HEK293 (cell line): ENCODE measurements at regions of chr7 and their contacts with region 1.

Region 1: GRCh38 chr7:138738551-138739335 is 37.6 kb upstream of the SVOPL start:
- H3K4me3 ChIP-seq: no peak overlapping the region
- H3K27ac ChIP-seq: no peak overlapping the region
- H3K4me1 ChIP-seq: no peaks in the 10 kb centered on the region
- CTCF ChIP-seq: peak; percentile 83

Region 2: GRCh38 chr7:138008547-138009349 is 730.0 kb before region 1 on chr7:
- CTCF ChIA-PET with region 1: interaction called, 10 read pairs
- POLR2A ChIA-PET with region 1: no interaction called
- H3K4me3 ChIP-seq: no peak overlapping the region
- H3K27ac ChIP-seq: no peak overlapping the region
- H3K4me1 ChIP-seq: no peaks in the 10 kb centered on the region
- CTCF ChIP-seq: peak; percentile 69

Region 3: GRCh38 chr7:138161600-138162081 is 577.1 kb before region 1 on chr7:
- CTCF ChIA-PET with region 1: interaction called, 39 read pairs
- POLR2A ChIA-PET with region 1: interaction called, 6 read pairs
- H3K4me3 ChIP-seq: no peak overlapping the region
- H3K27ac ChIP-seq: no peak overlapping the region
- H3K4me1 ChIP-seq: no peaks in the 10 kb centered on the region
- CTCF ChIP-seq: peak; percentile 47; the same call in 1 of the 2 replicates

Region 4: DNA sequence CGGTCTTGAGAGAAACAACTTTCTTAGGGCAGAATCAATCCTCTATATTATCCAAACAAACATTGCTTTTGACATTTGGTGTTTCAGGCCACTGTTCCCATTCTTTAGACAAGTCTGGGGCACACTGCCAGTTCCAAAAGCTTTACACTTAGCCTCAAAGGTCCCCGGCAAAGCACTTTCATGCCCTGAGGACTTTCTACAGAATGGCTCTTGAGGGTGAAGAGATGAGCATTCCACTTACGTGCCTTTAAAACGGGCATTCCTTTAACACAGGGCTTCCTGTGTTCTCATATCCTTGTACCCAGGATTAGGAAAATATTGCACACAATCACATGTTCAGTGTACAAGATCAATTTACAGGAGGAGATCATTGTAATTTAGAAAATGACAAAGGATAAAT is 45.9 kb after region 1 on chr7:
- CTCF ChIA-PET with region 1: no interaction called
- POLR2A ChIA-PET with region 1: no interaction called
- H3K4me3 ChIP-seq: no peak overlapping the region
- H3K27ac ChIP-seq: no peak overlapping the region
- H3K4me1 ChIP-seq: no peaks in the 10 kb centered on the region
- CTCF ChIP-seq: no peak